ENCODE measurements at regions of chr17 and their contacts with region 1.

Region 1: DNA sequence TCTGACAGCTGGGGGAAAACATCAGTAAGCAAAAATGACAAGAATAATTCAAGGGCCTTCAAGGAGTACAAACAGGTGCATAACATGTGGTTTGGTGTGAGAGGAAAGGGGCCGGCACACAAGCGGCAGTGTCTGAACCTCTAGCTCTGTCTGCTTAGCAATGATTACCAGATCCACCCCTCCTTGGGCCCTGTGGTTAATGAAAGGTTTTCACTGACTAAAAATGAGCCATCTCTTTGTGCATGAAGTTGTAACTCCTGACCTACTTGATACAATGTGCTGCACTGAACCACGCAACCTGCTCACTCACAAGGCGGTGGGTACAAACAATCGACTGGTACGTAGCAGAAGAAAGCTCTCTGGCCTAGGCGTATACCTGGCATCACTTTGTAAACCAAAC is 15.1 kb downstream of the FAM117A start:
- DNase-seq: no peak
- H3K4me3 Mint-ChIP-seq: no peak overlapping the region
- H3K27ac Mint-ChIP-seq: no peak overlapping the region
- H3K4me1 Mint-ChIP-seq: no peaks in the 10 kb centered on the region
- H3K27me3 Mint-ChIP-seq: no peaks in the 10 kb centered on the region
- CTCF ChIP-seq: no peak

Region 2: GRCh38 chr17:49459401-49459984 is 289.3 kb before region 1 on chr17:
- CTCF ChIA-PET with region 1: interaction called, 11 read pairs
- intact Hi-C with region 1: no loop called
- DNase-seq: no peak
- H3K4me3 Mint-ChIP-seq: no peak overlapping the region
- H3K27ac Mint-ChIP-seq: no peak overlapping the region
- H3K4me1 Mint-ChIP-seq: peaks cover 7% of the 10 kb centered on the region
- H3K27me3 Mint-ChIP-seq: peaks cover 100% of the 10 kb centered on the region
- CTCF ChIP-seq: no peak

Region 3: DNA sequence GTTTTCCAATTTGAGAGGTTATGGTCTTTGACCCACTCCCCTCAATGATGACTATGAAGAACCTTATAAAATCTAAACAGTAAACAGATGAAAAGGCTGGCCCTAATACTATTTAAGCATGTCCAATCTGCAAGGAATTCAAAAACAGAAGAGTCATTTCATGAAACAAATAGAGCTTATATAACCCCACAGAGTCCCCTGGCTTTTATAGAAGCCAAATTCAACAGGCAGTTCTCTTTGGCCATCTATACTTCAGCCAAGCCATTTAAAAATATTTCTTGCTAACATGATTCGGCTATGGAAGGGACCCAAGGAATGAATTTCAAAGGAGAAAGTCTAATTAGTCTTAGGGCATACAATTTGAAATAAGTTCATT is 114.3 kb before region 1 on chr17:
- CTCF ChIA-PET with region 1: no interaction called
- intact Hi-C with region 1: no loop called
- DNase-seq: no peak
- H3K4me3 Mint-ChIP-seq: no peak overlapping the region
- H3K27ac Mint-ChIP-seq: no peak overlapping the region
- H3K4me1 Mint-ChIP-seq: no peaks in the 10 kb centered on the region
- H3K27me3 Mint-ChIP-seq: no peaks in the 10 kb centered on the region
- CTCF ChIP-seq: no peak

Region 4: GRCh38 chr17:49997791-49998703 is 249.3 kb after region 1 on chr17:
- CTCF ChIA-PET with region 1: no interaction called
- intact Hi-C with region 1: no loop called
- DNase-seq: peak; percentile 95
- H3K4me3 Mint-ChIP-seq: peak overlapping the region; percentile 57
- H3K27ac Mint-ChIP-seq: no peak overlapping the region
- H3K4me1 Mint-ChIP-seq: peaks cover 33% of the 10 kb centered on the region
- H3K27me3 Mint-ChIP-seq: peaks cover 84% of the 10 kb centered on the region
- CTCF ChIP-seq: peak; percentile 98